Activated CD4-positive, alpha-beta memory T cell treated with anti-CD3 and anti-CD28 coated beads for 36 hours (primary cell): ENCODE measurements at regions of chr6 and their contacts with region 1.

Region 1: DNA sequence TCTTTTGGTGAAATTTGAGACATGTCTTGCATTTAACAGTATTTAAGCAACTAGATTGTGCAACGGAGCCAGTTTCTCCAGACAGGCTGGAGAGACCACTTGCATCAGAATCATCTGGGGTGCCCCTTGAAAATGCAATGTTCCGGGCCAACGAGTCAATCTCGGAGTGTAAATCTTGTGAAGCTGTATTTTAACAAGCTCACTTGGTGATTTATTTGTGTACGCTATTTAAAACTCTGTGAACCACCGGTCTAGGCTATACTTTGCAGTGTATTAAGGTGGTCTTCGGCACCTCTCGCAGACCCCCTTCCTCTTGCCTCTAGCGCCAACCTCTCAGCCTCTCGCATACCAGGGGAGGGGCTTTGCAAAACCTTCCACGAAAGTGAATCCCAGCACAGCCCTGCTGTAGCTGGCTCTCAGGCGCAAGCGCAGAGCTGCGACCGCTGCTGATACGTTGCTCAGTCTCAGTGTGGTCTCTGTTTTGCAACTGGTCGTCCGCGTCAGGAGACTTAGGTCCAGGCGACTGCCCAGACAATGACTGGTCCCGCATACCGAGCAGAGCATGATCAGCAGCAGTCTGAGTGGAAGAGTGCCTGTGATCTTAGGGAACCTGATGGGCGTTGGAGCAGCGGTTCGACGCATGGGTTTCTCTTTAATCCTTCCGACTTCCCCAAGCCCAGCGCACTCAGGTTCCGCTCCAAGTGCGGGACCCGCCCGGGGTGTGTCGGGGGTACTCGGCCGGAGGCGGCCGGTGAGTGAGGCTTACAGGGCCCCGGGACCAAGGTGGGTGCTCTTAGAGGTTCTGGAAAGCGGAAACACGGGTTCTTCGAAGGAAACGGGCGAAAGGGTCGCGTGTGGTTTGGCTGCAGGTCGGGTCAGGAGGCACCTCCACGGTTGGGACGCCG is at the start of gene ZNF391:
- DNase-seq: peak; percentile 78
- H3K4me3 Mint-ChIP-seq: peak within 1 kb of the TSS; percentile 93
- H3K27ac Mint-ChIP-seq: peak within 1 kb of the TSS; percentile 91
- H3K4me1 Mint-ChIP-seq: peaks cover 10% of the 10 kb centered on the region
- H3K27me3 Mint-ChIP-seq: no peaks in the 10 kb centered on the region
- total RNA-seq, gene ZNF391: 2.8 to 3.2 TPM

Region 2: DNA sequence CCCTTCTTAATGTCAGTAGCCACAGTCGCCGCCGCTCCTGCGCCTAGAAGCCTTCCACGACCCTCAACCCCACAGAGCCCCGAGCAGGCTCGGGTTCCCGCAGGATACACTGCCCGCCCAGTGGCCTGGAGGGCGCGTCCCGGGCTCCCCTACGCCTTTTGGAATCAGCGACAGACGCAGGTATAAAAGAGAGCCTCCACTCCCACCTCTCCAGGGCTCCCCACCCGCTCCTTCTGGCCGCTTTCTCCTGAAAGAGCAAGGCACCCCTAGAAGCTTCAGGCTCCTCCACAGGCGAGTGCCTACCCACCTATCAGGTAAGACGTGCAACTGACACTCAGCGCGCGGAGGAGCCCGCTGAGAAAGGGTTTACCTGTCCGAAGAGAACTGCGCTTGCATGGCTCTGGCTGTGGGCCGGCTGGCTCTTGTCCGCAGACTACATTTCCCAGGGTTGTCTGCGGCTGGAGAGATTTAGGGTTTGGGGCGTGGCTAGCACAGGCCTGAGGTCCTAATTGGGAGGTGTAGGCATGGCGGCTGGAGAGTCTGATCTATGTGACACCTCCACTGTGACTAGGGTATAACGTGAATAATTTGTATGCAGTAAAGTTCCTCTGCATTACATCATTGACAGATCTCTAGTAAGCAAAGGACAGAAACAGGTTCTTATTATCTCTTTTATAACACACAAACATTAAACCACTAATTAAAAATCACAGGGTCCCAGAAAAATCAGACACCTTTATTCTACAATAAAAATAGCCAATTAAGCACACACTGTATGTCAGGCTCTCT is 13.5 kb before region 1 on chr6:
- CTCF ChIA-PET with region 1: interaction called, 3 read pairs
- POLR2A ChIA-PET with region 1: interaction called, 6 read pairs
- intact Hi-C with region 1: loop called (anchors 1 kb)
- DNase-seq: peak; percentile 86
- H3K4me3 Mint-ChIP-seq: peak overlapping the region; percentile 81
- H3K27ac Mint-ChIP-seq: peak overlapping the region; percentile 59
- H3K4me1 Mint-ChIP-seq: peaks cover 19% of the 10 kb centered on the region
- H3K27me3 Mint-ChIP-seq: no peaks in the 10 kb centered on the region